Activated B cell treated with CpG ODN at 0.5 μM for 24 hours (primary cell): ENCODE measurements at regions of chr12 and their contacts with region 1.

Region 1: GRCh38 chr12:112012775-112013600 is at the starts of genes ERP29 and TMEM116:
- DNase-seq: peak; percentile 99
- ATAC-seq: peak; percentile 72
- H3K4me3 Mint-ChIP-seq: peak within 1 kb of the TSS; percentile 96
- H3K27ac Mint-ChIP-seq: peak within 1 kb of the TSS; percentile 99
- H3K4me1 Mint-ChIP-seq: peaks cover 63% of the 10 kb centered on the region
- H3K27me3 Mint-ChIP-seq: no peaks in the 10 kb centered on the region
- CTCF ChIP-seq: no peak
- total RNA-seq, gene ERP29: 133 and 135 TPM in 2 replicates
- total RNA-seq, gene TMEM116: 6.4 and 10.5 TPM in 2 replicates

Region 2: DNA sequence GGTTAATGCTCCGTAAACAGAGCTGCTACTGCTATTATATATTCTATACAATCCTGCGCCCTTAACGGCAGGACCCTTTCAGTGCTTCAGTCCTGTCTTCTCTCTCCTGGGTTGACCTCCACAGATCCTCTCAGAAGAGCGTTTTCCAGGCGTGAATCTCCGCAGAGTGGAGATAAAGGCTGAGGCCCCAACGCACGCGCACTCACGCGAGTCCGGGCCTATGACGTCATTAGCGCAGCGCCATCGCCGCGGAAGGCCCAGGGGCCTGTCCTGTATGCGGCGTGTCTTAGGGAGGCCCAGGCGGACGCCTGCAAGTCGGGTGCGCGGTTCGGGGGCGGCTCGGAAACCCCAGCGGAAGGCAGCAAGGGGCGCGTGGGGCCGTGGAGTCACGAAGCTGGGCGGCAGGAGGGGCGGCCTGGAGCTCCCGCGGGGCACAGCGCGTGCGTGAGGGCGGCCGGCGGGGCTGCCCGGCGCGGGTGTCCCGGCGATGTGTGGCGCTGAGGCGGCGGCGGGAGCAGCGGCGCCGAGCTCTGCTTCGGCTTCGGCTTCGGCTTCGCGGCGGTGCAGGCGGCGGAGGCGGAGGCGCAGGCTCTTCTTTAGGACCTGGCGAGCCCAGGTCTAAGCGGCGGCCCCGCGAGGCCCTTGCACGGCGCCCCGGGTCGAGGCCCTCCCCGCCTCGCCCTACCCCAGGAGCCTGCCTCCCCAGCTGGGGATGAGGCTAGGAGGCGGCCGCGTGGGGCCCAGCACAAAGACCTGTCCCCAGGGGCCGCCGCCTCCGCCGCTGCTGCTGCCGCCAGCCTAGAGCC is 171.0 kb before region 1 on chr12 and contains the start of gene MAPKAPK5:
- CTCF ChIA-PET with region 1: no interaction called
- POLR2A ChIA-PET with region 1: interaction called, 13 read pairs
- intact Hi-C with region 1: loop called (anchors 1 kb)
- DNase-seq: peak; percentile 98
- ATAC-seq: peak; percentile 90
- H3K4me3 Mint-ChIP-seq: peak within 1 kb of the TSS; percentile 95
- H3K27ac Mint-ChIP-seq: peak within 1 kb of the TSS; percentile 97
- H3K4me1 Mint-ChIP-seq: peaks cover 45% of the 10 kb centered on the region
- H3K27me3 Mint-ChIP-seq: no peaks in the 10 kb centered on the region
- CTCF ChIP-seq: no peak
- total RNA-seq, gene MAPKAPK5: 51.7 and 61.2 TPM in 2 replicates

Region 3: GRCh38 chr12:111993292-111994150 is 19.5 kb before region 1 on chr12:
- CTCF ChIA-PET with region 1: interaction called, 5 read pairs
- POLR2A ChIA-PET with region 1: interaction called, 52 read pairs
- intact Hi-C with region 1: loop called (anchors 1 kb)
- DNase-seq: no peak
- ATAC-seq: peak; percentile 37
- H3K4me3 Mint-ChIP-seq: peak overlapping the region; percentile 77
- H3K27ac Mint-ChIP-seq: no peak overlapping the region
- H3K4me1 Mint-ChIP-seq: peaks cover 46% of the 10 kb centered on the region
- H3K27me3 Mint-ChIP-seq: peaks cover 11% of the 10 kb centered on the region
- CTCF ChIP-seq: no peak

Region 4: DNA sequence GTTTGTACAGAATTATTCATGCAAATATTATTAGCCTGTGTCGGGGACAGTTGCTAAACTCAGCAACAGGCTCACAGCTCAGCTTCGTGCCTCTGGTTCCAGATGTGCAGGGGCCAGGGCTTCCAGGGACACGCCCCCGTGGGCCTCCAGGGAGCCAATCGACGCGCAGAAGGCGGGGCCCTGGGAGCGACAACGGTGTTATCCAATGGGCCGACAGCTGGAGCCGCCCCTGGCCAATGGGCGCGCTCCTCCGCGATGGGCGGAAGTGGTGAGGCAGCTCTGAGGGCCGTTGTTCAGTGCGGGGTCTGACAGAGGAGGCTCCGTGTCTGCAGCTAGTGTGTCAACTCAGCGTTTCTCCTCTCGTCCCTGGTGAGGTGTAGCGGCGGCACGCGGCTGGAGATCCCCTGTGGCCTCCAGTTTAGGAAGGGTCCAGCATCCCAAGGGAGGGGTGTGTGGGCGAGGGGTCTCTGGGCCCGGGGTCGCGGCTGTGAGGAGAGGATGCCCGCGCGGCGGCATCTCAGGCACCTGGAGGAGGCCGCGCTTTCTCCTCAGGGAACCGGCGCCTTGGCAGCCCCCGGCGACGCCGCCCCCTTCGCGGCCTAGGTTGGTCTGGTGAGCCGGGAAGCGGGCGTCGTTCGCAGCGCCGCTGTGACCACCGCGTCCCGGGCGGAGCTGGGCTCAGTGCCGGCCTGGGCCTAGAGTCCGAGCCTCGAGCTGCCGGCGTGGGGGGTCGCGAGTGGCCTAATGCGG is 112.4 kb after region 1 on chr12 and contains the start of gene TRAFD1:
- CTCF ChIA-PET with region 1: no interaction called
- POLR2A ChIA-PET with region 1: interaction called, 30 read pairs
- intact Hi-C with region 1: loop called (anchors 1 kb)
- DNase-seq: peak; percentile 96
- ATAC-seq: peak; percentile 98
- H3K4me3 Mint-ChIP-seq: peak within 1 kb of the TSS; percentile 87
- H3K27ac Mint-ChIP-seq: peak within 1 kb of the TSS; percentile 78
- H3K4me1 Mint-ChIP-seq: peaks cover 45% of the 10 kb centered on the region
- H3K27me3 Mint-ChIP-seq: no peaks in the 10 kb centered on the region
- CTCF ChIP-seq: no peak
- total RNA-seq, gene TRAFD1: 47.8 and 51.0 TPM in 2 replicates

Region 5: DNA sequence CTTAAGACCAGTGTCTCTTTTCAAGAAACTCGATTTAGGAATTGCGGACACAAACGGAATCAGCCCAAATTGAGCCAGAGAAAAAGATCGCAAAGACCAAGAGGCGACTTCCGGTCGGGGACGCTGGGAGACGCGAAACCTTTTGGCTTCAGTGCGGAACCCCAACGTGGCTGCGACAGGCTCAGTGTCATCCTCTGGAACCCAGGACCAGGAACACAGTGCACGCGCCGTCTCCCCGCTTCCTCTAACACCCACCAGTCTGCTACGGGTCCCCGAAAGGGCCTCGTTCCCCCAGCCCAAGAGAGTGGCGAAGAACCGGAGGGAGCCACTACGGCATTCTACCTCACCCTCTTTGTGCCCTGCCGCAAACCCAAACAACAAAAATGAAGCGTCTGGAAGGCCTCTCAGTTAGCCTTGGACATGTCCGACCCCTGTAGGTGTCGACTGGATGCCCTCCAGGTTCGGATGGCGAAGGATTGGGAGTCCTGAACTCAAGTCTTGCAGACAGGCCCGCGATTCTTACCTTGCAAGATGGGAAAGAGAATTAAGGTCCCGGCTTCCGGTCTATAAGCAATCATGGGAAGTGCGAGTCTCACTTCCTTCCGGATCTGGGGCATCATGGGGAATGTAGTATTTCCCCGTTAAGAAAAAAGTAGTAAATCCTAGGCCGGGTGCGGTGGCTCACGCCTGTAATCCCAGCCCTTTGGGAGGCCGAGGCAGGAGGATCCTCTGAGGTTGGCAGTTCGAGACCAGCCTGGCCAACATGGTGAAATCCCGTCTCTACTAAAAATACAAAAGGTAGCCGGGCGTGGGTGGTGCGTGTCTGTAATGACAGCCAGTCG is 396.3 kb after region 1 on chr12 and contains the start of gene RPL6:
- CTCF ChIA-PET with region 1: no interaction called
- POLR2A ChIA-PET with region 1: interaction called, 4 read pairs
- intact Hi-C with region 1: loop called (anchors 2 kb)
- DNase-seq: peak; percentile 70
- ATAC-seq: peak; percentile 91
- H3K4me3 Mint-ChIP-seq: peak within 1 kb of the TSS; percentile 100
- H3K27ac Mint-ChIP-seq: peak within 1 kb of the TSS; percentile 99
- H3K4me1 Mint-ChIP-seq: peaks cover 36% of the 10 kb centered on the region
- H3K27me3 Mint-ChIP-seq: no peaks in the 10 kb centered on the region
- CTCF ChIP-seq: no peak
- total RNA-seq, gene RPL6: 2,197 and 2,546 TPM in 2 replicates